Naive thymus-derived CD4-positive, alpha-beta T cell (primary cell): ENCODE measurements at regions of chr17 and their contacts with region 1.

Region 1: DNA sequence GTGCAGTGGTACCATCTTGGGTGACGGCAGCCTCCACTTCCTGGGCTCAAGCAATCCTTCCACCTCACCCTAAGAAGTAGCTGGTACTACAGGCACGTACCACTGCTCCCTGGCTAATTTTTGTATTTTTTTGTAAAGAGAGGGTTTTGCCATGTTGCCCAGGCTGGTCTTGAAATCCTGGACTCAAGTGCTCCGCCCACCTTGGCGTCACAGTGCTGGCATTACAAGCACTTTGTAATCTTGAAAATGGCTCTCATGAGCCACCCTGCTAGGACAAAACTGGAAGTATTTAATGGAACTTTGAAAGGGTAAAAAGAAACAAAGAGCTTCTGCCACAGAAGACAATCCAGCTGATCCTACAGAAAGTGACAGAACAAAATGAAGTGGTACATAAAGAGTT is 9.2 kb downstream of the SUMO2 start:
- DNase-seq: no peak
- ATAC-seq: no peak
- H3K4me3 ChIP-seq: no peak overlapping the region
- H3K4me3 Mint-ChIP-seq: no peak overlapping the region
- H3K27ac ChIP-seq: no peak overlapping the region
- H3K27ac Mint-ChIP-seq: peak overlapping the region in 3 of 9 donors; percentile 16 to 51 (median 31)
- H3K4me1 ChIP-seq: peaks cover 0 to 3% of the 10 kb centered on the region in 2 donors
- H3K4me1 Mint-ChIP-seq: peaks cover 0 to 24% (median 23%) of the 10 kb centered on the region in 7 donors
- H3K27me3 ChIP-seq: no peaks in the 10 kb centered on the region
- H3K27me3 Mint-ChIP-seq: no peaks in the 10 kb centered on the region

Region 2: GRCh38 chr17:73510981-73511718 is 1662.4 kb before region 1 on chr17:
- CTCF ChIA-PET with region 1: no interaction called
- POLR2A ChIA-PET with region 1: no interaction called
- intact Hi-C with region 1: no loop called
- DNase-seq: no peak
- ATAC-seq: no peak
- H3K4me3 ChIP-seq: no peak overlapping the region
- H3K4me3 Mint-ChIP-seq: no peak overlapping the region
- H3K27ac ChIP-seq: no peak overlapping the region
- H3K27ac Mint-ChIP-seq: no peak overlapping the region
- H3K4me1 ChIP-seq: no peaks in the 10 kb centered on the region
- H3K4me1 Mint-ChIP-seq: peaks cover 0 to 21% (median 0%) of the 10 kb centered on the region in 7 donors
- H3K27me3 ChIP-seq: no peaks in the 10 kb centered on the region
- H3K27me3 Mint-ChIP-seq: peaks cover 0 to 4% (median 0%) of the 10 kb centered on the region in 5 donors

Region 3: DNA sequence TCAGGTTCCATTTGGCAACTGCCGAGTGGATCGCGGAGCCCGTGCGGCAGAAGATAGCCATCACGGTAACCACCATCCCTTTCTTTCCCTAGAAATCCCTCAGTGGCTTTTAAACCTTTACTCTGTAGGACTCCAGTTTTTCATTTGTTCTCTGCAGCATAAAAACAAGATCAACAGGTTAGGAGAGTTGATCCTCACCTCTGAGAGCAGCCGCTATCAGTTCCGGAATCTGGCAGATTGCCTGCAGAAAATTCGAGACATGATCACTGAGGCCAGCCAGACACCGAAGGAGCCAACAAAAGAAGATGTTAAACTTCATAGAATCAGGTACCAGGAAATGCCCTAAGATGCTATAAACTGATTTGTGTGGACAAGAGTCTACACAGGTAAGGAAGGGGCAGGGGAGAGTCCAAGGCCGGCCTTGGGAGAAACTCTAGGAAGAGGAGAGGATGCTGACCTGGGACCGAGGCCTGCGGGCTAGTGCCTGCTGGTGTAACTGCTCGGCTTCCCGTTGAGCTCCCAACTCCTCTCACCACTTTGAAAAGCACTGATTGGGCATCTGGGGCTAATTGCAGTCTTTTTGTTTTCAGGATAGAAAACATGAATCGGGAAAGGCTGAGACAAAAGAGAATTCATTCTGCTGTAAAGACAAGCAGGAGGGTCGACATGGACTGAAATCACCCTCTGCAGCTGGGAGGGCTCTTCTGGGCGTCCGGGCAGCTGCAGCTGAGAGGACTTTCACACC is 153.0 kb before region 1 on chr17:
- CTCF ChIA-PET with region 1: no interaction called
- POLR2A ChIA-PET with region 1: no interaction called
- intact Hi-C with region 1: no loop called
- DNase-seq: no peak
- ATAC-seq: no peak
- H3K4me3 ChIP-seq: no peak overlapping the region
- H3K4me3 Mint-ChIP-seq: no peak overlapping the region
- H3K27ac ChIP-seq: no peak overlapping the region
- H3K27ac Mint-ChIP-seq: no peak overlapping the region
- H3K4me1 ChIP-seq: peaks cover 4% of the 10 kb centered on the region in 2 donors
- H3K4me1 Mint-ChIP-seq: peaks cover 11 to 29% (median 19%) of the 10 kb centered on the region in 7 donors
- H3K27me3 ChIP-seq: no peaks in the 10 kb centered on the region
- H3K27me3 Mint-ChIP-seq: no peaks in the 10 kb centered on the region

Region 4: DNA sequence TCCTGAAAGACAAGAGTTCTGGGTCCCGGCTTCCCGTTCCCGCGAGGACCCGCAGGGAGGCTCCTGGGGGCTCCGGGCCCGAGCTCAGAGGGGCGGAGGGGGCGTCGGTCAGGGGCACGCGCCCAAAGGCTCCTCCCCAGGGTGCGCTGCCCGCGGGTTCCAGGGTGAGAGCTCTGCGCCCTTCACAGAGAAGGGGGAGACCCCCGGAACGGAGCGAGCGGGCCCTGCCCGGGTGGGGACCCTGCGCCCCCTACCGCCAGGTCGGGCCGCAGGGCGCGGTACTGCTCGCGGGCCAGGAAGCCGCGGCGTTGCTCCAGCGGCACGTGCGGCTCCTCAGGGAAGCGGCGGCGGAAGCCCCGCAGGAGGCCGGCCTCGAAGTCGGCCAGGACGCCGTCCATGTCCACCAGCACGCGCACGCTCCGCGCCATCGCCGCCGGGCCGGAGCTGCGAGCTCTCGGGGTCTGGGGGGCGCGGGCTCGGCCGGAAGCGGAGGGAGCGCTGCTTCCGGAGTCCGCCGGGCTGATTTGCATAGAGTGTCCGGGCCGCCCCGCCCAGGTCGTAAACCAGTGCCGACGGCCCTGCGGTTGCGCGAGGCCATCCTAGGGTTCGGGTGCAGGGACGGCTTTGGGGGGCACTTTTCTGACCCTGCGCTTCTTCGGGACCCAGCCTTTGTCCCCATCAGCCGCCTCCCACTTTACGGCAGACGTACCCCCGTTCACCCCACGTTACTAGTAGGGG is 42.1 kb before region 1 on chr17 and contains the start of gene NT5C:
- CTCF ChIA-PET with region 1: interaction called, 5 read pairs
- POLR2A ChIA-PET with region 1: interaction called, 3 read pairs
- intact Hi-C with region 1: loop called in 1 of 2 experiments (anchors 5 kb)
- DNase-seq: peak; percentile 32 to 82 (median 50)
- ATAC-seq: peak; percentile 85
- H3K4me3 ChIP-seq: peak within 1 kb of the TSS; percentile 71
- H3K4me3 Mint-ChIP-seq: peak within 1 kb of the TSS; percentile 79 to 93 (median 88)
- H3K27ac ChIP-seq: peak within 1 kb of the TSS; percentile 84
- H3K27ac Mint-ChIP-seq: peak within 1 kb of the TSS; percentile 76 to 93 (median 88)
- H3K4me1 ChIP-seq: peaks cover 5 to 7% of the 10 kb centered on the region in 2 donors
- H3K4me1 Mint-ChIP-seq: peaks cover 7 to 23% (median 10%) of the 10 kb centered on the region in 7 donors
- H3K27me3 ChIP-seq: no peaks in the 10 kb centered on the region
- H3K27me3 Mint-ChIP-seq: no peaks in the 10 kb centered on the region
- total RNA-seq, gene NT5C: 23.4 to 54.8 (median 37.5) TPM

Region 5: DNA sequence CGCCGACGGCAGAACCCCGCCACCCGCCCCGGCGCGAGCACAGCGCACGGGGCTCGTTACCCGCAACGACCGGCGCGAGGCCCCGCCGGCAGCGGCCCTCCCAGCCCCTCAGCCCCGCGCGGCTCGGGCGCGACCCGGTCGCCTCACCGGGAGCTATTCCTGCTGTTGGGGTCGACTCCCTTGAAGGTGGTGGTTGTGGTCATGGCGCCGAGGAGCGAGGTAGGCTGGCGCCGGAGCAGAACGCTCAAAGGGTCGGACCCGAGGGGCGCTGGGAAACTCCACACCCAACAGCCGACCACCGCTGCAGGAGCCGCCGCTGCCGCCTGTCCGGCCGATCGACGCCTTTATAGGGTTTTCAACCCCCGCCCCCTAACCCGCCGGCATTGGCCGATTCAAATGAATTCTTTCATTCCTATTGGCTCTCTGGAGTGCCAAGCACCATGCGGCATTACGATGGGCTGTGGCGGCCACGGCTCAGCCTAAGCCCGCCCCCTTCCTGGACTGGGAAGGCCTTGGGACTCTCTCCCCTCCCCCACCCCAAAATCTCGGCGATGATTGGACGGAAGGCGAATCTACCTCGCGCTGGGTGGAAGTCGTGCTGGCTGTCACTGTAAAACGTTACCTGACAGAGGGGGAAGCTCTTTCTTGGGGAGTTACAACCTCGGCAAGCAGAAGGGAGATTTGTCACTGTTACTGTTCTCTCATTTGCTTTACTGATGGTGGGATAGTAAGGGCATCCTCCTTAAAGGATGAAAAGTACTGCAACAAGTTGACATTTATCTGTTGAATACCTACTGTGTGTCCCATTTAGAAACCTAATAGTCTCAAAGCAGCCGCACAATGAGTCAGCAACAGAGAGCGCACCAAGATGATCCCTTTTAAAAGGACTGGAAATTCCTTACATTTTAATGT is 19.1 kb before region 1 on chr17 and contains the start of gene JPT1:
- CTCF ChIA-PET with region 1: interaction called, 8 read pairs
- POLR2A ChIA-PET with region 1: interaction called, 7 read pairs
- intact Hi-C with region 1: loop called in 1 of 2 experiments (anchors 1 kb)
- DNase-seq: peak; percentile 82 to 98 (median 96)
- ATAC-seq: peak; percentile 100
- H3K4me3 ChIP-seq: peak within 1 kb of the TSS; percentile 84
- H3K4me3 Mint-ChIP-seq: peak within 1 kb of the TSS; percentile 88 to 98 (median 94)
- H3K27ac ChIP-seq: peak within 1 kb of the TSS; percentile 80
- H3K27ac Mint-ChIP-seq: peak within 1 kb of the TSS; percentile 78 to 96 (median 92)
- H3K4me1 ChIP-seq: peaks cover 0 to 18% of the 10 kb centered on the region in 2 donors
- H3K4me1 Mint-ChIP-seq: peaks cover 11 to 39% (median 36%) of the 10 kb centered on the region in 7 donors
- H3K27me3 ChIP-seq: no peaks in the 10 kb centered on the region
- H3K27me3 Mint-ChIP-seq: no peaks in the 10 kb centered on the region
- total RNA-seq, gene JPT1: 12.3 to 227 (median 29.3) TPM

Region 6: GRCh38 chr17:75205037-75205792 is 31.7 kb after region 1 on chr17 and contains the start of gene NUP85:
- CTCF ChIA-PET with region 1: interaction called, 8 read pairs
- POLR2A ChIA-PET with region 1: no interaction called
- intact Hi-C with region 1: loop called in 1 of 2 experiments (anchors 1 kb)
- DNase-seq: peak; percentile 87 to 97 (median 93)
- ATAC-seq: peak; percentile 96
- H3K4me3 ChIP-seq: peak within 1 kb of the TSS; percentile 82
- H3K4me3 Mint-ChIP-seq: peak within 1 kb of the TSS; percentile 91 to 98 (median 96)
- H3K27ac ChIP-seq: peak within 1 kb of the TSS; percentile 95
- H3K27ac Mint-ChIP-seq: peak within 1 kb of the TSS; percentile 94 to 100 (median 99)
- H3K4me1 ChIP-seq: peaks cover 0 to 5% of the 10 kb centered on the region in 2 donors
- H3K4me1 Mint-ChIP-seq: peaks cover 12 to 47% (median 26%) of the 10 kb centered on the region in 7 donors
- H3K27me3 ChIP-seq: no peaks in the 10 kb centered on the region
- H3K27me3 Mint-ChIP-seq: no peaks in the 10 kb centered on the region
- total RNA-seq, gene NUP85: 96.3 to 143 (median 99.2) TPM

Region 7: DNA sequence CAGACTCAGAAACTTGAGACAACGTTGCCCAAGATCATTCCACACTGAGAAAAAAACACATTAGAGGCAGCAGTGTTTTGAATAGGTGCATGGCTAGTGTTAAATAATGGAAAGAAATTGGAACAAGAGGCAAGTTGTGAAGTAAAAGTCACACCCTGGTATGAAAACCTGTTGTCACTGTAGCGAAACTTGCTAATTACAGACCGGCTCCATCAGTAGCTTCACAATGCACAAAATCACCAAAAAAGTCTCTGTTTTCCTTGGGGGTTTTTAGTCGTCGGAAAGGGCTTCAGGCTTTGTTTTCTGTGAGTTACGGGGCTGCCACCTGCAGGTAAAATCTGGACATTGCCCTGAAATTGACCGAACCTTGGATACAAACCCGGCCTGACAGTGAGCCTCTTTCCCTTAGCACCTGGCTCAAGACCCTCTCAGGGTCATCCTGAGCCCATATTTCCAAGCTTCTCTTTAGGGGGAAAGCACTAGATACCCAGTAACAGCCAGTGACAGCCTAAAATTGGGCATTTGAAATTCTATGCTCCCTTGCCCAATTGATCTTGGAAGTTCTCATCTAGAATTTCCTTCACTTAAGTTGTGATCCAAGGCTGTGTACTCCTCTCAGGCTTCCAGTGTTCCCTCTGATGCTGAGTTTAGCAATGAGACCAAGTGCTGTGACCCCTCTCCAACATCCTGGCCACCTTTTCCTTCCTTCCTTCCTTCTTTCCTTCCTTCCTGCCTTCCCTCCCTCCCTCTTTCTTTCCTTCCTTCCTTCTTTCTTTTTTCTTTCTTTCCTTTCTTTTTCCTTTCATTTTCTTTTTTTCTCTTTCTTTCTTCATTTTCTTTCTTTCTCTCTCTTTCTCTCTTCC is 239.2 kb after region 1 on chr17:
- CTCF ChIA-PET with region 1: no interaction called
- POLR2A ChIA-PET with region 1: no interaction called
- intact Hi-C with region 1: loop called in 1 of 2 experiments (anchors 1 kb)
- DNase-seq: peak; percentile 52 to 82 (median 73)
- ATAC-seq: peak; percentile 88
- H3K4me3 ChIP-seq: peak overlapping the region; percentile 25
- H3K4me3 Mint-ChIP-seq: peak overlapping the region; percentile 23 to 75 (median 60)
- H3K27ac ChIP-seq: peak overlapping the region; percentile 19
- H3K27ac Mint-ChIP-seq: peak overlapping the region in 6 of 9 donors; percentile 15 to 87 (median 45)
- H3K4me1 ChIP-seq: peaks cover 3 to 13% of the 10 kb centered on the region in 2 donors
- H3K4me1 Mint-ChIP-seq: peaks cover 14 to 26% (median 23%) of the 10 kb centered on the region in 7 donors
- H3K27me3 ChIP-seq: no peaks in the 10 kb centered on the region
- H3K27me3 Mint-ChIP-seq: peaks cover 0 to 27% (median 0%) of the 10 kb centered on the region in 5 donors

Region 8: DNA sequence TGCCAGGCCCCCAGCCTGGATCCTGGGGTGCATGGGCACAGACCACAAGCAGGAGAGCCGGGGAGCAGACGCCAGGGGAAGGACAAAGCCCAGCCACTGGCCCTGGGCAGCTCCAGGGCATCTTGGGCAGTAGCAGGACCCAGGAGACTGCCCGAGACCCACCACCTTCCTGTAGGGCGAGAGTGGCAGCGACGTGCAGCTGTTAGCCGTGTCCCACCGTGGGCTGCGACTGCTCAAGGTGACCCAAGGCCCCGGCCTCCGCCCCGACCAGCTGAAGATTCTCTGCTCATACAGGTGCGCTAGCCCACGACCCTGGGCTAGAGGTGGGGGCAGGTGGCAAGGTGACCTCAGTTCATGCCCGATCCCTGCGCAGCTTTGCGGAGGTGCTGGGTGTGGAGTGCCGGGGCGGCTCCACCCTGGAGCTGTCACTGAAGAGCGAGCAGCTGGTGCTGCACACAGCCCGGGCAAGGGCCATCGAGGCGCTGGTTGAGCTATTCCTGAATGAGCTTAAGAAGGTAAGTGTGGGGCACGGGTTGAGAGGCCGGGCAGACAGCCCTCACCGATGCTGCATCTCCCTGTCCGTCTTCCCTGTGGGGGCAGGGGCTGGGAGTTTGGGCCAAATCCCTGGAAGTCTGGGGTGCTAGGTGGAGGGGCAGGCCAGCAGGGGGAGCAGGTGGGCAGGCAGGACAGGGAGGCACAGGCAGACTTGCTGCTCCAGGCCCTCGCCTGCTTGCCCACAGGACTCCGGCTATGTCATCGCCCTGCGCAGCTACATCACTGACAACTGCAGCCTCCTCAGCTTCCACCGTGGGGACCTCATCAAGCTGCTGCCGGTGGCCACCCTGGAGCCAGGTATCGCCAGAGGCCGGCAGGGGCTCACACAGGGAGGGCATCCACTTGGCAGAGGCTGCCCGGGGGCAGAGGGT is 446.2 kb after region 1 on chr17:
- CTCF ChIA-PET with region 1: no interaction called
- POLR2A ChIA-PET with region 1: no interaction called
- intact Hi-C with region 1: no loop called
- DNase-seq: peak in 1 of 9 donors; percentile 10
- ATAC-seq: peak; percentile 17
- H3K4me3 ChIP-seq: no peak overlapping the region
- H3K4me3 Mint-ChIP-seq: no peak overlapping the region
- H3K27ac ChIP-seq: no peak overlapping the region
- H3K27ac Mint-ChIP-seq: peak overlapping the region in 1 of 9 donors; percentile 51
- H3K4me1 ChIP-seq: no peaks in the 10 kb centered on the region
- H3K4me1 Mint-ChIP-seq: peaks cover 0 to 5% (median 0%) of the 10 kb centered on the region in 7 donors
- H3K27me3 ChIP-seq: no peaks in the 10 kb centered on the region
- H3K27me3 Mint-ChIP-seq: no peaks in the 10 kb centered on the region